Activated CD8-positive, alpha-beta T cell treated with anti-CD3 and anti-CD28 coated beads, Interleukin-2, amount 10 ng/mL, durations not matched to agents 7 days and 5 days (primary cell): ENCODE measurements at regions of chr21 and their contacts with region 1.

Region 1: DNA sequence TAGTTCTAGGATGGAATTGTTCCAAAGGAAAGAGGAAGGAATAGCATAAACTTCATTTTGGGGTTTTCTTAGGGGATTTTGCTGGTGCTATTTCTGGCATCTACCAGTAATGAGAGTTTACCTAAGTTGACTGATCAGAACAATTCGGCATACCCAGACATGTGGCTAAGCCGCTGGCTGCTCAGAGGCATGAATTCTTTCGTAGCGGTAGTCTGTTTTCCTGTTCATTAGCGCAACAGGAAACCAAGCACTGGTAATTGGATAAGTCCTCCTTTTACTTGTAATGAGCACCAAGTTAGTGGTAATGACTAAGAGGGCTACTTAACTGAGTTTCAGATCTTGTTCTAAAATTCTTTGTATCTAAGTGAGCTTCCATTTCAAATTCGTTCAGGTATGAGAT is 38.6 kb downstream of the C21orf91 start:
- DNase-seq: peak; percentile 63
- ATAC-seq: peak; percentile 34
- H3K4me3 Mint-ChIP-seq: peak overlapping the region; percentile 49
- H3K27ac Mint-ChIP-seq: peak overlapping the region; percentile 82
- H3K4me1 Mint-ChIP-seq: peaks cover 90% of the 10 kb centered on the region
- H3K27me3 Mint-ChIP-seq: no peaks in the 10 kb centered on the region

Region 2: DNA sequence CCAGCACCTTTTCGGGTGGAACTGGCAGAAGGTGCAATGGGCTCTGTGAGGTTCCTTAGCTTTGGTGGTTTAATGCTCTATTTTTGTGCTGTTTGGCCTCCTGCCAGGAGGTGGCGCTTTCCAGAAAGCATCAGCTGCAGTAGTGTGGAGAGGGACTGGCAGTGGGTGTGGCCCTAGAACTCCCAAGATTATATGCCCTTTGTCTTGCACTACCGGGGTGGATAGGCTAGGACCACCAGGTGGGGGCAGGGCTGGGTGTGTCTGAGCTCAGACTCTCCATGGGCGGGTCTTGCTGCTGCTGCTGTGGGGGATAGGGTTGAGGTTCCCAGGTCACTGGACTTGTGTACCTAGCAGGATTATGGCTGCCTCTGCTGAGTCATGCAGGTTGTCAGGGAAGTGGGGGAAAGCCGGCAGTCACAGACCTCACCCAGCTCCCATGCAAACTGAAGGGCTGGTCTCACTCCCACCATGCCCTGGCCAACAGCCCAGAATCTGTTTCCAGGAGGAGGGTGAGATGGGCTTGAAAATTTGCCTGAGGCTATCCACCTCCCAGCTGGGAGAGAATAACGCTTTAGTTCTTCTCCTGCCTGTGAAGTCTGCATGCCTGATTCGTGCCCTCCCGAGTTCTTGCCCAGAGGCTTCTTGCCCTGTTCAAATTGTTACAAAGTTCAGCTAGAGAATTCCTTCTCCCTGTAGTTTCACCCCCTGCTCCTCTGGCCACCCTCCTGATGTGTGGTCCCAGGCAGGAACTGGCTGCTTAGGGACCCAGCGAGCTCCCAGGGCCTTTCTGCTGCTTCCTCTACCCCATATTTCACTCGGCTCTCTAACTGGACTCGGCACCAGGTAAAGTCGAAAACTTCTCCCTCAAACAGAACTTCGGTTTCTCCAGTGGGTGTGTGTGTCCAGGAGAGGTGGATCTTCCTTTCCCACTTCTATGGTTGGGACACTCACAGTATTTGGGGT is 91.3 kb before region 1 on chr21:
- CTCF ChIA-PET with region 1: interaction called, 21 read pairs
- POLR2A ChIA-PET with region 1: interaction called, 3 read pairs
- DNase-seq: peak; percentile 48
- ATAC-seq: no peak
- H3K4me3 Mint-ChIP-seq: no peak overlapping the region
- H3K27ac Mint-ChIP-seq: no peak overlapping the region
- H3K4me1 Mint-ChIP-seq: peaks cover 45% of the 10 kb centered on the region
- H3K27me3 Mint-ChIP-seq: no peaks in the 10 kb centered on the region

Region 3: DNA sequence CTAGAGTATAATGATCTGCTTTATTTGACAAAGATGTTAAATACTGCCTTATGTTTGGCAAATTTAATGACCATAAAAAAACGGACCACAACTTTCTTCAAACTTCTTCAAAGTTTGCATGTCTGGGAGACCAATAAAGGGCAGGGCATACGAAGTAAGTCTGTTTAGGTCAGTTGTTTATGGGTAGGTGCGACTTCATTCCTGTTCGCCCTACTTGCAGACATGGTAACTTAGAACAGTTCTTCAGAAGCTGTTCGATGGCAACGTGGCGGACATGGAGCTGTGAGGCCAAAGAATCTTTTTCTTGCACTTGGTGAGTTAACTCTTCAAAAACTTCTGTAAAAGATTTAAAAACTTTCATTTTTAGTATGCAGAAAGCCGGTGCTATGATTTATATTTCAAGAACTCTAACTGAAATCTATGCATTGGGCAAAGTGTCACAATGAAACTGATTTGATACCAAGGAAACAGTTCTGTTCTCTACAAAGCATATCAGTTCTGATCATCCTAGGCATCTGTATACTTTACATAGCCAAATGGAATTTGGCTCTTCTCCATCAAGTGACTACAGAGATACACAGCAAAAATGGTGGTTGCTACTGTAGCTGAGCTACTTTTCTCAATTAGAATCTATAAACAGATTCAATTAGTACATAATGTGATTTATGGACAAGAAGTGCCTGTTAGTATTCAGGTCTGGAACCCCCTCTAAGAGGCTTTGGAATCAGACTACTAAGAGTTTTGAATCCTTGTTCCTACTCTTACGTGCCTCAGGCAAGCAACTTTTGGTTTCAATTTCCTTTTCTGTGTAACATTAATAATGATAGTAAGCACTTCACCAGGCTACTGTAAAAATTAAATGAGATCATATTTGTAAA is 12.9 kb after region 1 on chr21:
- CTCF ChIA-PET with region 1: interaction called, 9 read pairs
- POLR2A ChIA-PET with region 1: interaction called, 11 read pairs
- DNase-seq: no peak
- ATAC-seq: peak; percentile 74
- H3K4me3 Mint-ChIP-seq: peak overlapping the region; percentile 73
- H3K27ac Mint-ChIP-seq: peak overlapping the region; percentile 89
- H3K4me1 Mint-ChIP-seq: peaks cover 74% of the 10 kb centered on the region
- H3K27me3 Mint-ChIP-seq: no peaks in the 10 kb centered on the region

Region 4: GRCh38 chr21:18070392-18070791 is 289.9 kb after region 1 on chr21:
- CTCF ChIA-PET with region 1: no interaction called
- POLR2A ChIA-PET with region 1: no interaction called
- DNase-seq: no peak
- ATAC-seq: no peak
- H3K4me3 Mint-ChIP-seq: no peak overlapping the region
- H3K27ac Mint-ChIP-seq: no peak overlapping the region
- H3K4me1 Mint-ChIP-seq: no peaks in the 10 kb centered on the region
- H3K27me3 Mint-ChIP-seq: no peaks in the 10 kb centered on the region